AG04450 (cell line): ENCODE measurements at regions of chr1 and their contacts with region 1.

Region 1: DNA sequence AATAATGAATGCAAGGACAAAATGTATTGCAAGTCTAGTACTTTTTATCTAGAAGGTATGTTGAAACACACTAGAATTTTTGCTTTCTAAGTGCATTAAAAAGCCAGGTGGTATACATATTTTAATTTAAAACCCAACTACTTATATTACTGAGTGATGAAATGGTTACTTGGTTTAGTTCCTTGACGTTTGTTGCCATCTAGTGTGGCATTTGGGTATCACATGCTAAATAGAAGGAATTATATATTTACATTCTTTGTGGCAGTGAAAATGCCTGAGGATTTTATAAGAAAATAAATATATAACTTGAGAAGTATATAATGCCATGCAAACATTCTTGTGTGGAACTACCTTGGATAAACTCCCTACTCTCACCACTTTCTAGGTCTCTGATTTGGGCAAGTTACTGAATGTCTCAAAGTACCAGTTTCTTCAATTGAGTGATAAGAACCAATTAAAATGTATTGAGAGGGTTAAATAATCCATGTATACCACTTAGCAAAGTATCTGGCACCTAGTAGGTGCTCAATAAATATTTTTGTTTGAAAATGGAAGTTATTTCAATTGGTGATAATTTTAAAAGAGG is 69.6 kb downstream of the SDCCAG8 start:
- DNase-seq: peak; percentile 74
- H3K4me3 ChIP-seq: no peak overlapping the region
- H3K27ac ChIP-seq: no peak overlapping the region
- H3K27me3 ChIP-seq: no peaks in the 10 kb centered on the region
- CTCF ChIP-seq: peak; percentile 78

Region 2: GRCh38 chr1:243301059-243301458 is 24.3 kb before region 1 on chr1:
- CTCF ChIA-PET with region 1: no interaction called
- POLR2A ChIA-PET with region 1: interaction called, 15 read pairs
- DNase-seq: no peak
- H3K4me3 ChIP-seq: no peak overlapping the region
- H3K27ac ChIP-seq: no peak overlapping the region
- H3K27me3 ChIP-seq: no peaks in the 10 kb centered on the region
- CTCF ChIP-seq: no peak

Region 3: DNA sequence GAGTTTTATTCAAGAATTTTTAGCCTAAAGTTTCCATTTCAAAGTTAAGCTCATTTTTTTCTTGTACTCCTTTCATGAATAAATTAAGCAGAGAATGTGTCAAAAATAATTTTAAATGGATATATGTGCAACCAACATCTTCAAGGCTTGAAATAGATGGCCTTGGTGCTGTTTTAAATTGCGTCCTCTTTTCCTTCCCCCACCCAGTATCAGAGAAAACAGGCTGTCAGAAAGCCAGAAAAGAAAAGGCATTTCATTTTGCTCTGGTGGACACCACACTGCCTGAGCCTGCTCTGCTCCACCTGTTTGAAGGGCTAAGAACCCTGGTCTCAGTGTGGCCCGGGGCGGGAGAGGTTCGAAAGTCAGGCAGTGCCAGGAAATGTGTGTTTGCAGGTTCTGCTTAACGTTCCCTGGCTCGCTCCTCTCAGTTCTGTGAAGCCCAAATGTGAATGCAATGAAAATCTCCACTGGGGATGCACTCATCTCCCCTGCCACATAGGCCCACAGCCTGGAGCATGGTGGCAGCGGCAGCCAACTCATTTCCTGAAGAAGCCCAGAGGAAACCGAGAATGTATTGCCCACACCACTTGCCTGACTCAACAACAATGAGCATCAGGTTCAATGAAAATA is 64.9 kb after region 1 on chr1:
- CTCF ChIA-PET with region 1: no interaction called
- POLR2A ChIA-PET with region 1: no interaction called
- DNase-seq: no peak
- H3K4me3 ChIP-seq: no peak overlapping the region
- H3K27ac ChIP-seq: no peak overlapping the region
- H3K27me3 ChIP-seq: no peaks in the 10 kb centered on the region
- CTCF ChIP-seq: no peak